ENCODE measurements at regions of chr11 and their contacts with region 1.

Region 1: DNA sequence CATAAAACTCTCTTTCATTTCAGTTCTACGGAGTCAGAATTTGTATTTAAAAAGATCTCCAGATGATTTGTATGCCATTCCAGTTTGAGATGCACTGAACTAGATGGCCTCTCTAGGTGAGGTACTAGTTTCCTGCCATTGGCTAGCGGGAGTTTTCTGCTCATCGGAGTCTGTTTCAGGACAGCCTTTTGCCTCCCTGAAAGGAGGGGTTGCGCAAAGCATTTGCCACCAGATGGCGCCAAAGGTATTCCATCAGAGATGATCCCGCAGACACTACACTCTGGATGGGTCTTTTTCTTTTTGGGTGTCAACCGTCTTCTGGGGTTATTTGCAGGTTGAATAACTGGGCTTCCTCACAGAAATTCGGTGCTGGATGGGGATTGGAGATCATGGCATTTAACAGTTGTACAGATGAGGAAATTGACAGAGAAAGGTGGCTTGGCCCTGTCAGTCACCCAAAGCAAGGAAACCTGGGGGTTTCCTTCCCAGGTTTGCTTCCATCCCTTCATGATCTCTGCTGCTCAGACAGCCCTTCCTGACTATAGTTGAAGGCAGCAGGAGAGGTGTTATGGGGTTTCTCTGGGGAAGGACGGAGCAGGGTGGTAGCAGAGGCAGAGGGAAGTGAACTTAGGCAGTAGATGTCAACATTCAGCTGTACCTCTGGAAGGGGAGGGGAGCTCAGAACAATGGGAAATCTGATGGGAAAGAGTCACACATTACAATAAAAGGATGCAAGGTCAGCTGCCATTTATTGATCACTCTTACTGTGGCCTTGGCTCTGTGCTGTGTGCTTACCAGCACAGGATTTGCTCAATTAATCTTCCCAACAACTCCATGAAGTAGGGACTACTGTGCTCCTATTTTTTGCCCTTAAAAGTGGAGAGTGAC is 81.6 kb downstream of the CCDC81 start:
- DNase-seq: peak; percentile 45 to 82 (median 71)
- ATAC-seq: no peak
- H3K4me3 ChIP-seq: no peak overlapping the region
- H3K4me3 Mint-ChIP-seq: no peak overlapping the region
- H3K27ac ChIP-seq: no peak overlapping the region
- H3K27ac Mint-ChIP-seq: no peak overlapping the region
- H3K4me1 ChIP-seq: no peaks in the 10 kb centered on the region
- H3K4me1 Mint-ChIP-seq: no peaks in the 10 kb centered on the region
- H3K27me3 ChIP-seq: no peaks in the 10 kb centered on the region
- H3K27me3 Mint-ChIP-seq: no peaks in the 10 kb centered on the region
- CTCF ChIP-seq: peak; percentile 75

Region 2: DNA sequence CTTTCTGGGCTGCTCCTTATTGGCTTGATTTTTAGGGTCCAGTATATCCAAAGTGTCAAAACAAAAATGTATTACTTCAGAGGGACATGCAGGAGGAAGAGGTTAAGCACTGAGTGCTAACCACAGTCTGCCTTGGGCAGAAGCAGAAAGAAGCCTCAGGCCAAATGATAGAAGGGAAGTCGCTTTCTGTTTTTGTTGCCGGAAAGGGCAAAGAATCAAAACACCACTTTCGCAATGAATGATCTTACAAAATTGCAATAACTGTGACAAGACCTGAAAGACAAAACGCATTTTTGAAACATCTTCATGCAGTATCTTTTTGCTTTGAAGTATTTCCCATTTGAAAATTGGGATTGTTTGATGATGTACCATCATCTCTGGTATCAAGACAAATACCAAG is 317.3 kb before region 1 on chr11:
- CTCF ChIA-PET with region 1: no interaction called
- POLR2A ChIA-PET with region 1: no interaction called
- intact Hi-C with region 1: no loop called
- DNase-seq: peak in 5 of 9 experiments; percentile 16 to 67 (median 47)
- ATAC-seq: peak; percentile 42
- H3K4me3 ChIP-seq: peak overlapping the region in 1 of 2 experiments; percentile 6
- H3K4me3 Mint-ChIP-seq: peak overlapping the region; percentile 68
- H3K27ac ChIP-seq: peak overlapping the region; percentile 27 to 65
- H3K27ac Mint-ChIP-seq: peak overlapping the region; percentile 91
- H3K4me1 ChIP-seq: peaks cover 26% of the 10 kb centered on the region
- H3K4me1 Mint-ChIP-seq: peaks cover 44% of the 10 kb centered on the region
- H3K27me3 ChIP-seq: no peaks in the 10 kb centered on the region
- H3K27me3 Mint-ChIP-seq: no peaks in the 10 kb centered on the region
- CTCF ChIP-seq: no peak

Region 3: DNA sequence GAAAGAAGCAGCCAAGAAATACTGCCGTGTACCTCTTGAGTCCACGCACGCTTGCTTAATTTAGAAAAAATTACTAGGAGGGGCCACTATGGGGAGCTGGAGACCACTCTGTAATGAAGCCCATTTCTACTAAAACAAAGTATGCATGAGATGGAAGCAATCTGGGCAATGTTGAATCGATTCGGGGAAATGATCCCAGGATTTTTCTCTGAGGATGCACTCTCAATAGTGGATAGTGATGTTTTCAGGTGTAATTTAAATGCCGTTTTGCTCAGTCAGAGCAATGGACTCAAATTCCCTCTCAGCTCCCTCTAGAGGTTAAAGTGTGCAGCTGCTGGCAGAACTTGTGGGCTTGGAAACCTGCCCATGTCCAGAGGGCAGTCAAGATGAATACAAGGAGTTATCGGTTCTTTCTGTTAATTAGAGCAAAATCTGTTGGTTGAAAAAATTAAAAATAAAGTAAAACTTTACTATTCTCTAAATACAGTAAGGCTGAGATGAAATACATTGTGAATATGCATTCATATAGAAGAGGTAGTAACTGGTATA is 152.0 kb after region 1 on chr11:
- CTCF ChIA-PET with region 1: interaction called, 5 read pairs
- POLR2A ChIA-PET with region 1: no interaction called
- intact Hi-C with region 1: loop called in 1 of 2 experiments (anchors 5 kb)
- DNase-seq: peak in 4 of 9 experiments; percentile 11 to 61 (median 34)
- ATAC-seq: no peak
- H3K4me3 ChIP-seq: no peak overlapping the region
- H3K4me3 Mint-ChIP-seq: no peak overlapping the region
- H3K27ac ChIP-seq: no peak overlapping the region
- H3K27ac Mint-ChIP-seq: no peak overlapping the region
- H3K4me1 ChIP-seq: no peaks in the 10 kb centered on the region
- H3K4me1 Mint-ChIP-seq: no peaks in the 10 kb centered on the region
- H3K27me3 ChIP-seq: no peaks in the 10 kb centered on the region
- H3K27me3 Mint-ChIP-seq: no peaks in the 10 kb centered on the region
- CTCF ChIP-seq: peak; percentile 57

Region 4: GRCh38 chr11:86818466-86819192 is 362.3 kb after region 1 on chr11:
- CTCF ChIA-PET with region 1: interaction called, 7 read pairs
- POLR2A ChIA-PET with region 1: no interaction called
- intact Hi-C with region 1: loop called in 1 of 2 experiments (anchors 1 kb)
- DNase-seq: peak in 2 of 9 experiments; percentile 57 to 69
- ATAC-seq: no peak
- H3K4me3 ChIP-seq: no peak overlapping the region
- H3K4me3 Mint-ChIP-seq: no peak overlapping the region
- H3K27ac ChIP-seq: no peak overlapping the region
- H3K27ac Mint-ChIP-seq: no peak overlapping the region
- H3K4me1 ChIP-seq: no peaks in the 10 kb centered on the region
- H3K4me1 Mint-ChIP-seq: peaks cover 3% of the 10 kb centered on the region
- H3K27me3 ChIP-seq: no peaks in the 10 kb centered on the region
- H3K27me3 Mint-ChIP-seq: peaks cover 14% of the 10 kb centered on the region
- CTCF ChIP-seq: peak; percentile 74

Region 5: GRCh38 chr11:86919557-86920210 is 463.4 kb after region 1 on chr11:
- CTCF ChIA-PET with region 1: interaction called, 4 read pairs
- POLR2A ChIA-PET with region 1: no interaction called
- intact Hi-C with region 1: loop called in 1 of 2 experiments (anchors 5 kb)
- DNase-seq: peak in 2 of 9 experiments; percentile 30 to 35
- ATAC-seq: no peak
- H3K4me3 ChIP-seq: no peak overlapping the region
- H3K4me3 Mint-ChIP-seq: no peak overlapping the region
- H3K27ac ChIP-seq: no peak overlapping the region
- H3K27ac Mint-ChIP-seq: no peak overlapping the region
- H3K4me1 ChIP-seq: peaks cover 5% of the 10 kb centered on the region
- H3K4me1 Mint-ChIP-seq: no peaks in the 10 kb centered on the region
- H3K27me3 ChIP-seq: no peaks in the 10 kb centered on the region
- H3K27me3 Mint-ChIP-seq: no peaks in the 10 kb centered on the region
- CTCF ChIP-seq: no peak